Naive thymus-derived CD4-positive, alpha-beta T cell (primary cell): ENCODE measurements at regions of chr1 and their contacts with region 1.

Region 1: GRCh38 chr1:168439456-168440375 is 104.1 kb downstream of the XCL2 start:
- DNase-seq: peak; percentile 45 to 86 (median 80)
- ATAC-seq: peak; percentile 95
- H3K4me3 ChIP-seq: peak overlapping the region; percentile 46
- H3K4me3 Mint-ChIP-seq: peak overlapping the region; percentile 48 to 88 (median 79)
- H3K27ac ChIP-seq: peak overlapping the region; percentile 17
- H3K27ac Mint-ChIP-seq: peak overlapping the region; percentile 20 to 91 (median 59)
- H3K4me1 ChIP-seq: peaks cover 28 to 43% of the 10 kb centered on the region in 2 donors
- H3K4me1 Mint-ChIP-seq: peaks cover 32 to 62% (median 45%) of the 10 kb centered on the region in 7 donors
- H3K27me3 ChIP-seq: no peaks in the 10 kb centered on the region
- H3K27me3 Mint-ChIP-seq: peaks cover 0 to 3% (median 0%) of the 10 kb centered on the region in 5 donors

Region 2: DNA sequence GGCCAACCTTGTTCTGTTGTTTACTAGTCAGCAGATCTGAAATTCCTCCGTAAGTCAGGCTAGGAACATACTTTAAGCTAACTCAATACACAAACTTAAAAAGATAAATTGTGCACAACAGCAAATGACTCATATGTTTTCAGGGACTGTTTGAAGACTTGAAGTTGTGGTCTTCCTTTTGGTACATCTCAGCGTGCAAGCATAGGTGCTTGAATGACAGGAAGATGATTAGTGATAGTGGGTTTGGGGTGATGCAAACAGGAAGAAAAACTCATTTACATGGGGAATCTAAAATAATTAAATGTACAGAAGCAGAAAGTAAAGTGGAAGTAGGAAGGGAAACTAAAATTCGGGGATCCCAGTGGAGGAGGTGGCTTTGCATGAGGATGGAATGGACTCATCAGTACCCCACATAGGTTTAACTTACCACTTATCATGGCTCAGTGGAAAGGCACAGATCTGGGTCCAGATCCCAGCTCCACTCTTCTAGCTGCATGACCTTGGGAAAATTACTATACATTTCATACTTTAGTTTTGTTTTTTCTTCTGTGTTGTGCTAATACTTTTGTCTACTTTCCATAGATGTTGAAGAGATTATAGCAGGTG is 18.2 kb before region 1 on chr1:
- CTCF ChIA-PET with region 1: interaction called, 3 read pairs
- POLR2A ChIA-PET with region 1: interaction called, 3 read pairs
- intact Hi-C with region 1: loop called in 1 of 2 experiments (anchors 1 kb)
- DNase-seq: no peak
- ATAC-seq: peak; percentile 81
- H3K4me3 ChIP-seq: no peak overlapping the region
- H3K4me3 Mint-ChIP-seq: peak overlapping the region in 2 of 10 donors; percentile 48 to 54
- H3K27ac ChIP-seq: no peak overlapping the region
- H3K27ac Mint-ChIP-seq: peak overlapping the region in 5 of 9 donors; percentile 14 to 75 (median 23)
- H3K4me1 ChIP-seq: peaks cover 0 to 38% of the 10 kb centered on the region in 2 donors
- H3K4me1 Mint-ChIP-seq: peaks cover 5 to 24% (median 7%) of the 10 kb centered on the region in 7 donors
- H3K27me3 ChIP-seq: no peaks in the 10 kb centered on the region
- H3K27me3 Mint-ChIP-seq: no peaks in the 10 kb centered on the region

Region 3: DNA sequence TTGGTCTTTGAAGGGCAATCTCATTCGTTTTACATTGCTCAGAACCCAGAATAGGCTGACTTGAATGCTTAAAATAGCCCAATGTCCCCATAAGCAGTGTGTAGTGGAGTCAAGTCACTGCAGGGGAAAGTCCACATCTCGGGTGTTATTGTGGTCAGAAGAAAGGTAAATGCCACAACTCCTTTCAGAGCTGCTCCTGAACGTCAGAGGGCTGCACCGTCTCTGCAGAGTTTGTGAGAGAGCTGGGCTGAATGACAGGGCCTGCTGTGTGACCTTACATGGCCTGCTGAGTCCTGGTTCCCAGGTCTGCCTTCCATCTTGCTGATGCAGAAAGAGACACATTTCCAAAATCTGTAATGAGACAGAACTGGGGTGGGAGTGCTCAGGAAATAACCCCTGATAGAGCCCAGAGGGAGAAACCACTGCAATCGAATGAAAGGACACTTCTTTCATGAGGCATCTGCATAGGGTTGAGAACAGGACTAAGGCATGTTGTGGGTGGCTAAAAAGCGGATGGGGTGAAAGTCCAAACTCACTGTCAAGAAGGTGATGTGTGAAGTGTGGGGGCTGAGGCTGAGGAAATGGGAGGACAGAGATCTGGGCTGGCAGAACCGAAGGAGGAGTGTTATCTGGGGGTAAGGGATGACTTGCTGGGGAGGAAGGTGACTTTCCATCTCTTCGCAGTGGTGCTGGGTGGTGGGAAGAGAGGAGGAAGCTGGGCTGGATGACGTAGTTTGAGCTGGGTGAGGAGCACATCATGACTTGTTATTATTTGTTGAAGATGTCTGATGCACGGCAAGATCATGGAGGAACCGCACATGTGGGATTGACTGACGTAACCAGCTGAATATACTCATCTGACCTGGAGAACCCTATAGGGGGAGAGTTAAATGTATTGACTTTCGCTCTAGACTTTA is 70.4 kb after region 1 on chr1:
- CTCF ChIA-PET with region 1: no interaction called
- POLR2A ChIA-PET with region 1: interaction called, 4 read pairs
- intact Hi-C with region 1: loop called in 1 of 2 experiments (anchors 2 kb)
- DNase-seq: no peak
- ATAC-seq: peak; percentile 64
- H3K4me3 ChIP-seq: no peak overlapping the region
- H3K4me3 Mint-ChIP-seq: peak overlapping the region in 1 of 10 donors; percentile 57
- H3K27ac ChIP-seq: no peak overlapping the region
- H3K27ac Mint-ChIP-seq: peak overlapping the region in 3 of 9 donors; percentile 15 to 77 (median 26)
- H3K4me1 ChIP-seq: peaks cover 27 to 54% of the 10 kb centered on the region in 2 donors
- H3K4me1 Mint-ChIP-seq: peaks cover 42 to 78% (median 46%) of the 10 kb centered on the region in 7 donors
- H3K27me3 ChIP-seq: no peaks in the 10 kb centered on the region
- H3K27me3 Mint-ChIP-seq: no peaks in the 10 kb centered on the region

Region 4: DNA sequence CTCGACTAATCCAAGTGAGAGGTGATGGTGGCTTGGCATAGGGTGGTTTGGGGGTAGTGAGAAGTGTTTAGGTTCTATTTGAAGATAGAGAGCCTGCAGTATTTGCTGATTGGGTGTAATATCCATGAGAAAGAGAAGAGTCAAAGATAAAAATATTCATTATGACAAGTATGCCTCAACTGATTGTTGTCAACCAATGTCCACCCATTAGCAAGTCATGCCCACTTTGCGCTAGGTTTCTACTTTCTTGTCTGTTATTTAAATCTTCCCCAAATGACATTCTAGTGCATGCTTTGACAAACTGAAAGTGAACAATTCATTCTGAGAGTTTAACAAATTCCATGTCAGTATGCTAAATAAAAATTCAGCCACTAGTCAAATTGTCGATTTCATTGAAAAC is 132.9 kb after region 1 on chr1:
- CTCF ChIA-PET with region 1: interaction called, 12 read pairs
- POLR2A ChIA-PET with region 1: no interaction called
- intact Hi-C with region 1: loop called (anchors 1 kb)
- DNase-seq: no peak
- ATAC-seq: no peak
- H3K4me3 ChIP-seq: no peak overlapping the region
- H3K4me3 Mint-ChIP-seq: no peak overlapping the region
- H3K27ac ChIP-seq: no peak overlapping the region
- H3K27ac Mint-ChIP-seq: no peak overlapping the region
- H3K4me1 ChIP-seq: peaks cover 0 to 4% of the 10 kb centered on the region in 2 donors
- H3K4me1 Mint-ChIP-seq: peaks cover 3 to 26% (median 8%) of the 10 kb centered on the region in 7 donors
- H3K27me3 ChIP-seq: no peaks in the 10 kb centered on the region
- H3K27me3 Mint-ChIP-seq: peaks cover 0 to 28% (median 0%) of the 10 kb centered on the region in 5 donors

Region 5: GRCh38 chr1:168603501-168604110 is 163.9 kb after region 1 on chr1:
- CTCF ChIA-PET with region 1: interaction called, 12 read pairs
- POLR2A ChIA-PET with region 1: no interaction called
- intact Hi-C with region 1: loop called (anchors 1 kb)
- DNase-seq: peak; percentile 42 to 72 (median 58)
- ATAC-seq: peak; percentile 89
- H3K4me3 ChIP-seq: no peak overlapping the region
- H3K4me3 Mint-ChIP-seq: no peak overlapping the region
- H3K27ac ChIP-seq: no peak overlapping the region
- H3K27ac Mint-ChIP-seq: no peak overlapping the region
- H3K4me1 ChIP-seq: no peaks in the 10 kb centered on the region
- H3K4me1 Mint-ChIP-seq: peaks cover 0 to 7% (median 0%) of the 10 kb centered on the region in 7 donors
- H3K27me3 ChIP-seq: peaks cover 0 to 4% of the 10 kb centered on the region in 2 donors
- H3K27me3 Mint-ChIP-seq: peaks cover 0 to 30% (median 1%) of the 10 kb centered on the region in 5 donors

Region 6: GRCh38 chr1:168783458-168784230 is 343.9 kb after region 1 on chr1:
- CTCF ChIA-PET with region 1: no interaction called
- POLR2A ChIA-PET with region 1: no interaction called
- intact Hi-C with region 1: no loop called
- DNase-seq: no peak
- ATAC-seq: no peak
- H3K4me3 ChIP-seq: no peak overlapping the region
- H3K4me3 Mint-ChIP-seq: no peak overlapping the region
- H3K27ac ChIP-seq: no peak overlapping the region
- H3K27ac Mint-ChIP-seq: no peak overlapping the region
- H3K4me1 ChIP-seq: no peaks in the 10 kb centered on the region
- H3K4me1 Mint-ChIP-seq: no peaks in the 10 kb centered on the region
- H3K27me3 ChIP-seq: no peaks in the 10 kb centered on the region
- H3K27me3 Mint-ChIP-seq: peaks cover 9 to 40% (median 23%) of the 10 kb centered on the region in 5 donors

Region 7: DNA sequence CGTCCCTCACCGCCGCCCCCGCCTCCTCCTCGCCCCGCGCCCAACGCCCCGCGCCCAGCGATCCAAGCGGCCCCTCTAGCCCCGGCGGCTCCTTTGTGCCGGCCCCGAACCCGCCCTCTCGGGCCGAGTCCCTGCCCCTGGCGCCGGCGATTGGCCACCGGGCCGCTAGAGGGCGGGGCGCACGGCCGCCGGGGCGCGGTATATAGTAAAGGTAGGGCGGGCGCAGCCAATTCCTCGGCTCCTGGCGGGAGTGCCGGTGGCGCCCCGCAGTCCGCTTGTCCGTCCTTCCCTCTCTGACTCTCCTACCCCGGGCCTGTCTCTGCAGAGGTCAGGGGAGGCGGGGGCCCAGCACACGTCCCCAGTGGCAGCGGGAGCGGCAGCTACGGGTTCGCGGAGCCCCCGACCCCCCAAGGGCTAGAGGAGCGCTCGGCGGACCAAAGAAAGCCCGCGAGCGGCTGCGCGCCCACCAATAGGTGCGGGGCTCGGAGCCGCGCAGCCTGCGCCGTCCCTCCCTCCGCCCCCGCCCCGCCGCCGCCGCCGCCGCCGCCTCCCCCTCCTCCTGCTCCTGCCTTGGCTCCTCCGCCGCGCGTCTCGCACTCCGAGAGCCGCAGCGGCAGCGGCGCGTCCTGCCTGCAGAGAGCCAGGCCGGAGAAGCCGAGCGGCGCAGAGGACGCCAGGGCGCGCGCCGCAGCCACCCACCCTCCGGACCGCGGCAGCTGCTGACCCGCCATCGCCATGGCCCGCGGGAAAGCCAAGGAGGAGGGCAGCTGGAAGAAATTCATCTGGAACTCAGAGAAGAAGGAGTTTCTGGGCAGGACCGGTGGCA is 666.6 kb after region 1 on chr1 and contains the start of gene ATP1B1:
- CTCF ChIA-PET with region 1: no interaction called
- POLR2A ChIA-PET with region 1: no interaction called
- intact Hi-C with region 1: loop called in 1 of 2 experiments (anchors 5 kb)
- DNase-seq: peak; percentile 66 to 90 (median 76)
- ATAC-seq: peak; percentile 95
- H3K4me3 ChIP-seq: peak within 1 kb of the TSS; percentile 67
- H3K4me3 Mint-ChIP-seq: peak within 1 kb of the TSS; percentile 81 to 93 (median 88)
- H3K27ac ChIP-seq: peak within 1 kb of the TSS; percentile 58
- H3K27ac Mint-ChIP-seq: peak within 1 kb of the TSS in 8 of 9 donors; percentile 29 to 85 (median 56)
- H3K4me1 ChIP-seq: peaks cover 7 to 21% of the 10 kb centered on the region in 2 donors
- H3K4me1 Mint-ChIP-seq: peaks cover 24 to 48% (median 40%) of the 10 kb centered on the region in 7 donors
- H3K27me3 ChIP-seq: no peaks in the 10 kb centered on the region
- H3K27me3 Mint-ChIP-seq: peaks cover 0 to 19% (median 0%) of the 10 kb centered on the region in 5 donors
- total RNA-seq, gene ATP1B1: 1.8 to 10.6 (median 2.3) TPM

Region 8: DNA sequence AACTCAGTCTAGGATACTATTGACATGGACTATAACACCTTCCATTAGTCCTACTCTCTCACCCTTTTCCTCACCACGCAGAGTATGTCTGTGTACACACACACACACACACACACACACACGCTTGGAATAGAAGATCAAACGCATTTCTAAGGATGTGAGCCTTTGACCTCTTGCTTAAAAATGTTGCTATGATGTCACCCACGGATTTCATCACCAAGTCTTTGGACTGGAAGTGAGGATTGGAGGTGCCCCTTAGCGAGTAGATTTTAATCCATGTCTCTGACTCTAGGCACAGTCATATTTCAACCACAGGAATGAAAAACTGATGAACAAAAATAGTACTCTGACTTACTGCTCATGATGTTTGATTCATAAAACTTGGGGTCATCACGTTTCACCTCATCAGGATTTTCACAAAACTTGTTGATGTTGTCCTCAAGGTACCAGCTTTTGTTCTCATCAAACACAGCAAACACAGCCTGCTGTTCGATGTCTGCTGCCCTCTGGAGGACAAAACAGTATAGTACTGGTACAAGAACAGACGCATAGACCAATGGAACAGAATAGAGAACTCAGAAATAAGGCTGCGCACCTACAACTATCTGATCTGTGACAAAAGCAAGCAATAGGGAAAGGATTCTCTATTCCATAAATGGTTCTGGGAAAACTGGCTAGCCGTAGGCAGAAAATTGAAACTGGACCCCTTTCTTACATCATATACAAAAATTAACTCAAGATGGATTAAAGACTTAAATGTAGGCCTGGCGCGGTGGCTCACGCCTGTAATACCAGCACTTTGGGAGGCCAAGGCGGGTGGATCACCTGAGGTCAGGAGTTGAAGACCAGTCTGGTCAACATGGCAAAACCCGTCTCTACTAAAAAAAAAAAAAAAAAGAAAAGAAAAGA is 1106.6 kb after region 1 on chr1:
- CTCF ChIA-PET with region 1: no interaction called
- POLR2A ChIA-PET with region 1: no interaction called
- intact Hi-C with region 1: loop called in 1 of 2 experiments (anchors 5 kb)
- DNase-seq: peak in 7 of 9 donors; percentile 40 to 73 (median 68)
- ATAC-seq: peak; percentile 92
- H3K4me3 ChIP-seq: no peak overlapping the region
- H3K4me3 Mint-ChIP-seq: no peak overlapping the region
- H3K27ac ChIP-seq: no peak overlapping the region
- H3K27ac Mint-ChIP-seq: peak overlapping the region in 1 of 9 donors; percentile 7
- H3K4me1 ChIP-seq: no peaks in the 10 kb centered on the region
- H3K4me1 Mint-ChIP-seq: peaks cover 0 to 14% (median 0%) of the 10 kb centered on the region in 7 donors
- H3K27me3 ChIP-seq: no peaks in the 10 kb centered on the region
- H3K27me3 Mint-ChIP-seq: no peaks in the 10 kb centered on the region